ENCODE measurements at regions of chr16 and their contacts with region 1.

Region 1: DNA sequence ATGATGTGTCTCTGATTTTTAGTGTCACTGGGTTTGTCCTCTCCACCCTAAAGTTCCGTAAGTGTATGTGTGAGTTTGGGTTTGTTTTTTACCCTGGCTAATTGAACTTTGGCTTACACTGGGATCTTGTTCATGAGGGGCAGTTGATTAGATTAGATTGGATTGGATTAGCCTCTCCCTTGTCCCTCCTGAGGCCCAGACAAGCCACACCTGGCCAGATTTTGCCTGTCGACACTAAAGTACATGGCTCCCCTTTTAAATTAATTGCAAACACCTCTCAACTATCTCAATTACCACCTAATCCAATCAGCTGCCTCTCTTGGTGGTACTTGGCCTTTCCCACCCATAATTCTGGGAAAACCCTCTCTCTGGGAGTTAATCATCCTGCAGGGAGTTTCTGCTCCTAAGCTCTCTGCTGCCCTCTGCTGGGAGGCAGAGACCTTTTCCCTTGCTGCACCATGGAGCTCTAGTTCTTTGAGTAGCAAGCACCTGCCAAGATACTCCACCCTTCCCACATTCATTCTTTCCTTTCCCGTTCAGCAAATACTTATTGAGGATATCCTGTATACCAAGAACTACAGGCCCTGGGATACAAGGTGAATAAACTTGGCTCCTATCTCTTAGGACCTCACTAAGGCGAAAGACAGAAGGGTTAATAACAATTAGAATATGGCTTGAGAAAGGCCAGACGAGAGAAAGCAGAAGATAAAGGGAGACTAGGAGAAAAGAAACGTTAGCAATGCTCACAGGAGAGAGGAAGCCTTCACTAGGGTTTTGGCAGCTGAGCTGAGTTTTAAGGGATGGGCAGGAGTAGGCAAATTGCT is 60.0 kb upstream of the MPHOSPH6 start:
- DNase-seq: peak; percentile 43 to 86
- H3K4me3 ChIP-seq: no peak overlapping the region
- H3K27ac ChIP-seq: no peak overlapping the region
- H3K4me1 ChIP-seq: no peaks in the 10 kb centered on the region
- H3K27me3 ChIP-seq: peaks cover 0 to 1% (median 0%) of the 10 kb centered on the region in 4 experiments; a peak in 1 of 7 replicates
- CTCF ChIP-seq: peak; percentile 79 to 88 (median 88)
- EP300 ChIP-seq: no peak
- POLR2A ChIP-seq: no peak
- RAD21 ChIP-seq: peak; percentile 94 to 95

Region 2: DNA sequence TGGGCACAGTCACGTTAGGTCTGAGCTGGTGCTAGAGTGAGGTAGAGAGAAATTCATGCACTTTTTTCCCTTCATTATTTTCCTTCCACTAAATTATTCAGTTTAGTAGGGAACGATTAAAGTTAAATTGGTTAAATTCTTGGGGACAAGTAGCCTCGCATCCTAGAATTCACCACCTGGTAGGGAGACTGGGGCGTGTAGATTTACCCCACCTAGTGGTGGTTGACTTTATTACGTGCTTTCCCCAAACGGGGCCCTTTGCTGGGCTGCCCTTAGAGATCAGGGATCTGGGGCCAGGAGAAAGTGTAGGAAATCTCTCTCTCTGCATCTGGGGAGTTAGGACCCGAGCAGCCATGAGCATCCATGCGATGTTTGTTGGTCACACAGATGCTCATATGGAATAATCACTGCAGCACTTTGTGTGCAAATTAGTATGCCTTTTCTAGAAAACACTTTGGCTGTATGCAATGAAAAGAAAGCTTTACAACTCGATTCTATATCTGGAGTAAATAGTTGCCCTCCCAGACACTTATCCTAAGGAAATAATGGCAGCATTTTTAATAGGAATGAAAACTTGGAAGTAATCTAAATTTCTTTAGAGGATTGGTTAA is 343.9 kb before region 1 on chr16:
- CTCF ChIA-PET with region 1: interaction called, 10 read pairs
- POLR2A ChIA-PET with region 1: no interaction called
- DNase-seq: peak; percentile 36 to 77
- H3K4me3 ChIP-seq: no peak overlapping the region
- H3K27ac ChIP-seq: no peak overlapping the region
- H3K4me1 ChIP-seq: peaks cover 0 to 3% (median 1%) of the 10 kb centered on the region in 4 experiments; a peak in 1 of 7 replicates
- H3K27me3 ChIP-seq: no peaks in the 10 kb centered on the region
- CTCF ChIP-seq: peak; percentile 58 to 77 (median 75)
- EP300 ChIP-seq: no peak
- POLR2A ChIP-seq: no peak
- RAD21 ChIP-seq: peak; percentile 60 to 71

Region 3: DNA sequence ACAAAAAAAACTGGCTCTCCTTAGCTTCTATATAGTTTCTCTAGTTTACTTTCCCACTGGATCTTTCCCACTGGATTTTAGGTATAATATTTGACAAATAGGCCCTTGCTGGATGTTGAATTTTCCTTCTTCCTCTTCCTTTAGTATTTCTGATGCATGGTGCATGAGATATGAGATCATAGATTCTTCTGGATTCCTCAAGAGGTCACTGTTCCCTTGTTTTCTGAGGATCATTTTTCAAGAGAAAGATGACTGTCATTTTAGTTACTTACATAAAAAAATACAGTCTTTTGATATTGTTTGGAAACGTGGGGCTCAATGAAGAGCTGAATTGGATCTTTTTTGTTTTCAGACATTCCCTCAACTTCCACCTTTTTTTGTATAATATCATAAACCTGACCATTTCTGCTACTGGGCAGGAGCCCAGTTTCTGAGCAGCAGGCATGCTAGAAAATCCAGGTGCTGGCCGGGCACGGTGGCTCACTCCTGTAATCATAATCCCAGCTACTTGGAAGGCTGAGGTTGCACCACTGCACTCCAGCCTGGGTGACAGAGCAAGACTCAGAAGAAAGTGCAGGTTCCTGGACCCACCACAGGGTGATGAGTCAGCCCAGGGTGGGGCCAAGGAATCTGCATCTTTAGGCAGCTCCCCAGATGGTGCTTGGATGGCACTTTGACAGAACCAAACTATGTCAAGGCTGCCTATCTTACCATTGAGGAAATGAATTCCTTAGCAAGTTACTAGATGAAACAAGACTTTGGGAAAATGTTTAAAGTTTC is 289.0 kb before region 1 on chr16:
- CTCF ChIA-PET with region 1: interaction called, 46 read pairs
- POLR2A ChIA-PET with region 1: no interaction called
- DNase-seq: peak in 1 of 2 experiments; percentile 45
- H3K4me3 ChIP-seq: no peak overlapping the region
- H3K27ac ChIP-seq: no peak overlapping the region
- H3K4me1 ChIP-seq: peaks cover 7 to 31% (median 29%) of the 10 kb centered on the region in 4 experiments
- H3K27me3 ChIP-seq: 0 out of 7 replicates have a peak, but pooled peaks cover 0 to 2% (median 0%) of the 10 kb centered on the region in 4 experiments
- CTCF ChIP-seq: peak in 2 of 3 experiments; percentile 20 to 43; a peak in 2 of 4 replicates
- EP300 ChIP-seq: no peak
- POLR2A ChIP-seq: no peak
- RAD21 ChIP-seq: peak; percentile 62 to 64

Region 4: DNA sequence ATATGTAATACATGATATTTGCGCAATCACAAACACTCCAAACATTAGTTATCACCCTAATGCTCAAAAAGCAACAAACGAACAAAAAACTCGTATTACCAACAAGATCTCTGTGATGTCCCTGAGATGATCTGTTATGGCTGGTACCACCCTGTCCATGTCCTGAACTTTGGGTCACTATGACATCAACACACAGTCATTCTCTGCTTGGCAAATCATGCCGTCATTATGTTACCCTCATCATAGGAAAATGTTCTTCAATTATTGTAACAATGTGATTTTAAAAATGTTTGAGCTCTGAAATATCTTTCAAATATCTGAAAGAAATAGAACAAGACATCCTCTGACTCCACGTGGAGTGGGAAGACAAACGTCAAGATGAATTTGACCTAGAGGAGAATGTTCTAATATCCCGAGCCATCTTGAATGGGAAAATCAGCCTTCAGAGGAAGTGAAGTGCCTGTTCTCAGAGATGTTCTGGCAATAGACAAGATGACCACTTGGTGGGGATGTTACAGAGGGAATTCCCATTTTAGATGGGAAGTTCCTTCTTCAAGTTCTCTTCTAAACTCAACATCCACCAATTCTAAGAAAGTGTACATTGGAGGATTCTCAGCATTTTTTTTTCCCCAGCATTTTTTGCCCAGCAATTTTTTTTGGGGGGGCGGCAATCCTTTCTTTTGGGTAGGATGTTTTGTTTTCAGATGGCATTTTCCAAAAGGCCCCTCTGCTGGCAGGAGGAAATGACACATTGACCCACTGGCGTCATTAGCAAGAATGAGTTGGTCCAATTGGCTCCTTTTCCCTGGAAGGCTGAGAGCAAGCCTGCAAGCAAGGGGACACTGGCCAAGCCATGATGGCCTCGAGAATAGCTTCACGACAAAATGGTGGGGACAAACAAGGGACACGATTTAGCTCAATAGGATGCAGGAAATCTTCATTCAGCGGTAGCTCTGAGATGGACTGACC is 198.6 kb before region 1 on chr16:
- CTCF ChIA-PET with region 1: interaction called, 43 read pairs
- POLR2A ChIA-PET with region 1: interaction called, 3 read pairs
- DNase-seq: no peak
- H3K4me3 ChIP-seq: no peak overlapping the region
- H3K27ac ChIP-seq: no peak overlapping the region
- H3K4me1 ChIP-seq: no peaks in the 10 kb centered on the region; a peak in 1 of 7 replicates
- H3K27me3 ChIP-seq: no peaks in the 10 kb centered on the region
- CTCF ChIP-seq: peak in 2 of 3 experiments; percentile 69 to 71; a peak in 3 of 4 replicates
- EP300 ChIP-seq: no peak
- POLR2A ChIP-seq: no peak
- RAD21 ChIP-seq: peak; percentile 86 to 92

Region 5: GRCh38 chr16:82295290-82296201 is 65.5 kb after region 1 on chr16:
- CTCF ChIA-PET with region 1: no interaction called
- POLR2A ChIA-PET with region 1: no interaction called
- DNase-seq: no peak
- H3K4me3 ChIP-seq: no peak overlapping the region
- H3K27ac ChIP-seq: no peak overlapping the region
- H3K4me1 ChIP-seq: no peaks in the 10 kb centered on the region
- H3K27me3 ChIP-seq: no peaks in the 10 kb centered on the region
- CTCF ChIP-seq: no peak
- EP300 ChIP-seq: no peak
- POLR2A ChIP-seq: no peak
- RAD21 ChIP-seq: no peak